Activated naive CD8-positive, alpha-beta T cell treated with anti-CD3 and anti-CD28 coated beads, Interleukin-2, amount 10 ng/mL, durations not matched to agents 7 days and 5 days (primary cell): ENCODE measurements at regions of chr20 and their contacts with region 1.

Region 1: DNA sequence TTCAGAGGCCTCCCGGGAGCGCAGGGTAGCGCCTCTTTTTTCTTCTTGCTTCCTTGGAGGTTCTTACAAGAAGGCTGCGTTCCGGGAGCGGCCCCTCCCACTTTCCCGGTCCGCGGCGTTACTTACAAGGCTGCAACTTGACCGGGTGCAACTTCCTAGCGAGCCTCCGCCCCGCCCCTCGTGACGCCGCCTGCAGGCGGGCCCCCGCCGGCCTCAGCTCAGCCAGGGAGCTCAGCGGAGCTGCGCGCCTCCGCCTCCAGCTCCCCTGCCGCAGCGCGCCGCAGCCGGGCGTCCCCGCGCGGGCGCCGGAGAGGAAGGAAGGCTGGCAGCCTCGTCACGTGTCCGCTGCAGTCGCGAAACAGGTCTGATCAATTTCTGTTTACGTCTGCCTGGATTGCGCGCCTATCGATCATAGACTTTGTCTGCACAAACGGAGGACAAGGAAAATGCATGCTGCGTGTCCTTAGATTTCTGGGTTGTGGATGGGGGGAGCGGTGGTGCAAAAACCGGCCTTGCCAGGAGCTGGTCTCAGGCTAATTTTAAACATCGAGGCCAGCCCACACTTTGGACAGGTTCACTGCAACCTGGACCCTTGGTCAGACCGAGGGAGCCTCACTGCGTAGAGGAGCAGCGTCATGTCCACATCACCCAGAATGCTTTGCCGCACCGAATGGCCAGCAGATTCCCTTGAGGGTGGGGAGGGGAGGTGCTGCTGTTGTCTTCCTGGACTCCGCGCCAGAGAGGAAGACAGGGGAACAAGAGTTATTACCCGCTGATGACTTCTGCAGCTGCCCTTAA is at the starts of genes FAM217B and PPP1R3D:
- DNase-seq: peak; percentile 95
- ATAC-seq: peak; percentile 96
- H3K4me3 Mint-ChIP-seq: peak within 1 kb of the TSS; percentile 87
- H3K27ac Mint-ChIP-seq: peak within 1 kb of the TSS; percentile 95
- H3K4me1 Mint-ChIP-seq: peaks cover 31% of the 10 kb centered on the region
- H3K27me3 Mint-ChIP-seq: no peaks in the 10 kb centered on the region
- total RNA-seq, gene FAM217B: 32.7 to 36.0 TPM
- total RNA-seq, gene PPP1R3D: 9.5 to 10.8 TPM

Region 2: DNA sequence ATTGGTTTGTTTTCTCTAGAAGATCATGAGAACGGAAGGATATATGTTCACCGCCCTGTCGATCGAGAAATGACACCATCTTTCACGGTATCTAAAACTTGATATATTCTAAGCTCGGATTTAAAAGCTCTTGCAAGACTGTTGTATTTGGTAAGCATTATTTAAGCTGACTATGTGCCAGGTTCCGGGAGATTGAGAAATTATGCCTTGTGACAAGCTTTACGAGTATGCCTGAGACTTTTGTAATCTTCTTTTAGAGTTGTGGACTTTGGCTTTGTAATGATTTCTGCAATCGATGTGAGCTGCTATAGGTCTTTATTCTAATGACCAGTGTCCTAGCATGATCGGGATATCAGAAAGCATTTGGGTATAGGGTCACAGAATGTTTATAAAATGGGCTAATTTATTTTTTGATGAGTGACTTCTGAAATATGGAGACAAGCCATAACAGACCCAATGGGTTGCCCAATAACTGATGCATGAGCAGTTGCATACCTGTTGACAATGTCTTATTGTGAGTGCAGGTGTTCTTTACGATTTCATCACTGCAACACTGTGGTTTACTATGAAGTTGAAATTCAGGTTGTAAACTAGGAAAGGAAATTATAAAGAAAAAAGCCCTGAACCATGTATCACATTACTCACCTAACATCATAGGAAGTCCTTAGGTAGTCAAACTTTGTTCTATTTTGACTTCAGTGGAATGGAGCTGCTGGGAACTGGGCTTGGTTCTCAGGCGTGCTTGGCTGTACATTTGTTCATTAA is 31.8 kb after region 1 on chr20:
- POLR2A ChIA-PET with region 1: no interaction called
- DNase-seq: no peak
- ATAC-seq: no peak
- H3K4me3 Mint-ChIP-seq: no peak overlapping the region
- H3K27ac Mint-ChIP-seq: no peak overlapping the region
- H3K4me1 Mint-ChIP-seq: no peaks in the 10 kb centered on the region
- H3K27me3 Mint-ChIP-seq: no peaks in the 10 kb centered on the region

Region 3: DNA sequence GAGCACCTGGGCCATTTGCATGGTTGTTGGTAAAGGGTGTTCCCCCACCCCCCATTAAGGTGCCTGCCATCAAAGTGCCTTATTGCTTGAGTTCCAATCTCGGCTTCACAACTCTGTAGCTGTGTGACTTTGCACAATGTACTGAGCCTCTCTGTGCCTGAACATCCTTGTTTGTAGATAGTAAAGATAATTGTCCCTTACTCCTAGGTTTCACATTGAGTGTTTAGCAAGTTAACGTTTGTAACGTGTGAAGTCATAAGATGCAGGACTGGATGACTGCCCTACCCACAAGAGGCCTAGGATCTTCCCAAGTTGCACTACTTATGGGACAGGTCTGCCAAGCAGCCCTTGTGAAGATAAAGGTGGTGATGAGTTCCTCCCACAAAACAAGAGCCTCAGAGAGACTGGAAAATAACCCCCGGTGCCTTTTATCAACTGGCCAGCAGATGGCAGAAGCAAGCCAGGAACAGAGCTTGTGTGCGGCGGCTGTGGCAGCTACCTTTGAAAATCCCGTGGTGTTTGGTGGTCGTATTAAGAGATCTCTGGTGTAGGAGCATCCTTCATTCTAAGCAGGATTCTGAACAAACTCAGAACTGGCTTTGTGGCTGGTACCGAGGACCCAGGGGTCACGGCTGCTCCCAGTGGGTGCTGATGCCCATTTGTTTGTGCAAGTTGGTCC is 116.9 kb after region 1 on chr20:
- POLR2A ChIA-PET with region 1: interaction called, 19 read pairs
- DNase-seq: peak; percentile 72
- ATAC-seq: peak; percentile 39
- H3K4me3 Mint-ChIP-seq: peak overlapping the region; percentile 77
- H3K27ac Mint-ChIP-seq: peak overlapping the region; percentile 82
- H3K4me1 Mint-ChIP-seq: peaks cover 41% of the 10 kb centered on the region
- H3K27me3 Mint-ChIP-seq: peaks cover 6% of the 10 kb centered on the region